IMR-90 (cell line): ENCODE measurements at regions of chr7 and their contacts with region 1.

Region 1: DNA sequence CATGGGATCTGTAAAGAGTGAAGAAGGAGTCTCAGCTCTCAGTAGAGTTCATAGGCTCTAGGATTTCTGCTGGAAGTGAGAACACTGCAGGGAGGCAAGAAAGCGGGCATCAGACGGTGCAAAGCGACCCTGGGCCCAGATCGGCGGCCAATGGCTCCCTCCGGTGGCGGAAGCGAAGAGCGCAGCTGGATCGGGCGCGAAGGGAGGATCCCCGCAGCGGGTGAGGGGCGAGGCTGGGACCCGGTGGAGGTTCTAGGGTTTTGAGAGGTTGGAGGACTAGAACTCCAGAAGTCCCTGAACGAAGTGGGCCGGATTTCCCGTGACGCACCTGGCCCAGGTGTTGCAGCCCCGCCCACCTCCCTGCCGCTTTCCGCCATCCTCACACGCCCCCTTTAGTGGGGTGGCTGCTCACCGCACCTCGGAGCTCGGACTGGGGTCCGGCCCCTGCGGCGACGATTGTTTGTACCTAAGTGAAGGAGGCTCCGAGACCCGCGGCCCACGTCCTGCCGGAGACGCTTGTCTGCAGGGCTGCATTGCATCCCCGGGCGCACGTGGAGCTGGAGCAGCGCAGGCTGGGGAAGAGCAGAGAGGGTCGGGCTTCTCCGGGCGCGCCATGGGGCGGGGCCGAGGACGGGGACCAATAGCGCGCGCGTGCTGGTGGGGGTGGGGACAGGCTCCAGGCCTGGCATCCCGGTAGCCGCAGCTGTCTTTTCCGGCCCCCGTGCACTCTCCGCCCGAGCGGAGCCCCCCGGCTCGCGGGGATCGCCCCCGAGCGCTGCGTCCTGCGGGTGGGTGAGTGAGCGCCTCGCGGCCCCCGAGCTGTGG is at the start of gene SLC12A9:
- DNase-seq: peak; percentile 85
- ATAC-seq: peak; percentile 99
- H3K4me3 ChIP-seq: peak within 1 kb of the TSS; percentile 79
- H3K27ac ChIP-seq: peak within 1 kb of the TSS; percentile 41
- H3K4me1 ChIP-seq: no peaks in the 10 kb centered on the region
- H3K27me3 ChIP-seq: no peaks in the 10 kb centered on the region
- CTCF ChIP-seq: peak; percentile 95
- POLR2A ChIP-seq: 0 out of 2 replicates have a peak, but pooled peaks have one; percentile 18
- RAD21 ChIP-seq: peak; percentile 97
- total RNA-seq, gene SLC12A9: 3.3 and 4.5 TPM in 2 replicates

Region 2: GRCh38 chr7:100611974-100612729 is 240.1 kb before region 1 on chr7 and contains the start of gene MOSPD3:
- CTCF ChIA-PET with region 1: no interaction called
- POLR2A ChIA-PET with region 1: no interaction called
- dilution Hi-C with region 1: no loop called
- in situ Hi-C with region 1: no loop called
- intact Hi-C with region 1: loop called (anchors 5 kb)
- DNase-seq: peak; percentile 99
- ATAC-seq: peak; percentile 98
- H3K4me3 ChIP-seq: peak within 1 kb of the TSS; percentile 68
- H3K27ac ChIP-seq: peak within 1 kb of the TSS; percentile 88
- H3K4me1 ChIP-seq: peaks cover 6% of the 10 kb centered on the region
- H3K27me3 ChIP-seq: no peaks in the 10 kb centered on the region
- CTCF ChIP-seq: no peak
- POLR2A ChIP-seq: peak; percentile 50; the same call in 1 of the 2 replicates
- RAD21 ChIP-seq: no peak
- total RNA-seq, gene MOSPD3: 2.2 and 2.3 TPM in 2 replicates

Region 3: DNA sequence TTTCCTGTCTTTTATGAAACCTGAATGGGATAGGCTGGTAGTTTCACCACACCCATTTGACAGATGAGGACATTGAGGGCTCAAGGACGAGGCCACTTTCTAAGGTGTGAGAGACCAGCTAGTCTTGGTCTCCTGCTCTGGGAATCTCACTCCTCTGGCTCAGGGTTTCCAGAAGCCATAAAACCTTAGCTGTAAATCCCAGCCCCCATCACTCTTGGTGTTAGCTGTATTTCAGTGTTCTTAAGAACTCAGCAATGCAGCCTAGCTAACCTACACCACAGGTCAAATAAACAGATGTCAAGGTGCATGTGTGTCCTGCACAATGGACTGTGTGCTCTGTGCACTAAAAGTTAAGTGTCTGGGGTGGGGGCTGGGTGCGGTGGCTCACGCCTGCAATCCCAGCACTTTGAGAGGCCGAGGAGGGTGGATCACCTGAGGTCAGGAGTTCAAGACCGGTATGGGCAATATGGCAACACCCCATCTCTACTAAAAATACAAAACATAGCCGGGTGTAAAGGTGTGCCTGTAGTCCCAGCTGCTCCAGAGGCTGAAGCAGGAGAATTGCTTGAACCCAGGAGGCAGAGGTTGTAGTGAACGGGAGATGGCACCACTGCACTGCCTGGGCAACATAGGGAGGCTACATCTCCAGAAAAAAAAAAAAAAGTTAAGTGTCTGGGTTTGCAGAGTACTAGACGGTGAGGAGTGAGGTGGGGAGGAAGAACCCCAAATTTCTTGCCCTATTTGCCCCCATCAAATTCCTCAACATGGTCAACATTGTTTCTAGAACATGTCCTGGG is 132.5 kb before region 1 on chr7:
- CTCF ChIA-PET with region 1: interaction called, 14 read pairs
- POLR2A ChIA-PET with region 1: no interaction called
- dilution Hi-C with region 1: no loop called
- in situ Hi-C with region 1: no loop called
- intact Hi-C with region 1: loop called (anchors 1 kb)
- DNase-seq: peak; percentile 51
- ATAC-seq: peak; percentile 79
- H3K4me3 ChIP-seq: no peak overlapping the region
- H3K27ac ChIP-seq: no peak overlapping the region
- H3K4me1 ChIP-seq: no peaks in the 10 kb centered on the region
- H3K27me3 ChIP-seq: peaks cover 56% of the 10 kb centered on the region
- CTCF ChIP-seq: peak; percentile 51
- POLR2A ChIP-seq: no peak
- RAD21 ChIP-seq: peak; percentile 59

Region 4: GRCh38 chr7:100726996-100727761 is 125.1 kb before region 1 on chr7:
- CTCF ChIA-PET with region 1: interaction called, 10 read pairs
- POLR2A ChIA-PET with region 1: no interaction called
- dilution Hi-C with region 1: no loop called
- in situ Hi-C with region 1: no loop called
- intact Hi-C with region 1: no loop called
- DNase-seq: peak; percentile 61
- ATAC-seq: no peak
- H3K4me3 ChIP-seq: no peak overlapping the region
- H3K27ac ChIP-seq: no peak overlapping the region
- H3K4me1 ChIP-seq: peaks cover 9% of the 10 kb centered on the region
- H3K27me3 ChIP-seq: peaks cover 29% of the 10 kb centered on the region
- CTCF ChIP-seq: no peak
- POLR2A ChIP-seq: no peak
- RAD21 ChIP-seq: no peak

Region 5: DNA sequence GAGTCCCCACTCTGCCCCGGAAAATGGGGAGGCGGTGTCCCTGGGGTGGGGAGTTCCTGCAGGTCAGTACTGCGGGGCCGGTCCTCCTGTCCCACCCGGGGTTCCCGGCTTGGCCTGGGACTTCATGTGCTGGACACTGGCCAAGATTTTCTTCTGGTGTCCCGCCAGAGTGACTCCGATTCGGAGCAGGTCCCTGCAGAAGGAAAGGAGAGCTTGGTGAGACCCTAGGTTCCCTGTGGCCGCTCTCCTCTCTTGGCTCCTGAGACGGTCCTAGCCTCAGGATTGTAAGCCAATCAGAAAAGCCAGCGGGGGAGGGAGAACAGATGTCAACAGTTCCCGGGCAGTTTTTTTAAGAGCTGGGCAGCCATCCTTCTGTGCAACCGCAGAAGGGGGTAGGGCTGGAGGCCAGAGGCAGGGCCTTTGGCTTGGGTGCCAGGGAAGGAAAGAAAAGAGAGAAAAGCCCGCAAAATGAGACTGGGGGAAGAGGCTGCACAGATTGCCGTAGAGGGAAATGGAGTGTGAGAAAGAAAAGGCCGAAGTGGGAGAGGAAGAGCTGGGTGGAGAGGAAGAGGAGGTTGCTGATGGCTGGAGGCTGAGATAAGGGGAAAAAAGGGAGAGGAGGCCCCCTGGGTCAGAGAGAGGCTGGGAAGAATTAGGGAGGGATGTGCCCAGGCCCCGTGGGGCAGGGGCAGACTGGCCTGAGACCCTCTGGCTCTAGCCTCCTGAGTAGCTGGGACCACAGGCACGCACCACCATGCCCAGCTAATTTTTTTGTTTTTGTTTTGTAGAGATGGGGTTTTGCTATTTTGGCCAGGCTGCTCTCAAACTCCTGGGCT is 48.6 kb before region 1 on chr7:
- CTCF ChIA-PET with region 1: interaction called, 21 read pairs
- POLR2A ChIA-PET with region 1: no interaction called
- dilution Hi-C with region 1: no loop called
- in situ Hi-C with region 1: no loop called
- intact Hi-C with region 1: loop called (anchors 5 kb)
- DNase-seq: peak; percentile 83
- ATAC-seq: peak; percentile 85
- H3K4me3 ChIP-seq: no peak overlapping the region
- H3K27ac ChIP-seq: peak overlapping the region; percentile 70; the same call in 1 of the 2 replicates
- H3K4me1 ChIP-seq: peaks cover 18% of the 10 kb centered on the region
- H3K27me3 ChIP-seq: no peaks in the 10 kb centered on the region
- CTCF ChIP-seq: no peak
- POLR2A ChIP-seq: no peak
- RAD21 ChIP-seq: no peak